ENCODE measurements at regions of chr2 and their contacts with region 1.

Region 1: DNA sequence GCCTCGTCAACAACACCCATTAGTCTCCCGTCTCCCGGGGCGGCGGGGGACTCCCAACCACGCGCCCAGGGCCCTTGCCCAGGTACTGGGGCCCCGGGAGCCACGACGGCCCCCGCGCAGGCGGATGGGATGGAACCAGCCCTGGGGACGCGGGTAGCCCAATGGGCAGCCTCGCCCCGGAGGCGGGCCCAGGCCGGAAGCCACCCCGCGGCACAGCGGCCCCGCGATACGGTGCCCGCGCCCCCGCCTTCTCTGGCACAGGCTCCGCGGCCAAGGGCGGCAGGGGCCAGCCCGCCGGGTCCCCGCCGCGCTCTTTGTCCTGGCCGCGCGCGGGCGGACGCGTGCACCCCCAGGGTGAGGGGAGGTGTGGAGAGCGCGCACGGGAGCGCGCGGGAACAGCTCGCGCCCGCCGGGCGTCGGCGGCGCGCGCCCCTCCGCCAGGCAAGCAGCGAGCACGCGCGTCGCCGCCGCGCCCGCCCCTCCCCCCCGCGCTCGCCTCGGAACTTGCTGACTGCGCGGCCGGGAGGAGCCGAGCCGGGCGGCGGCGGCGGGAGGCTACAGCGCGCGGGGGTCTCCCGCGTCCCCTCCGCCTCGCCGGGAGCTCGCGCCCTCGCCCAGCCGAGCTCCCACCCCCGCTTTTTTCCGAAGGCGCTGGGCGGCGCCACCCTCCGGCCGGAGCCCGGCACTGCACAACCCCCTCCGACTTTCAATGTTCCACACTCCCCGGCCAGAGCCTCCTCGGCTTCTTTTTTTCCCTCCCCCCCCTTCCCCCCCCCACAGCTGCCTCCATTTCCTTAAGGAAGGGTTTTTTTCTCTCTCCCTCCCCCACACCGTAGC is at the start of gene UBE2E3:
- DNase-seq: peak; percentile 94
- H3K4me3 Mint-ChIP-seq: peak within 1 kb of the TSS; percentile 89
- H3K27ac Mint-ChIP-seq: peak within 1 kb of the TSS; percentile 97
- H3K4me1 Mint-ChIP-seq: peaks cover 34% of the 10 kb centered on the region
- H3K27me3 Mint-ChIP-seq: peaks cover 38% of the 10 kb centered on the region
- total RNA-seq, gene UBE2E3: 53.9 and 54.9 TPM in 2 replicates

Region 2: GRCh38 chr2:180006781-180007579 is 973.3 kb before region 1 on chr2 and contains the start of gene CWC22:
- intact Hi-C with region 1: loop called (anchors 2 kb)
- DNase-seq: peak; percentile 95
- H3K4me3 Mint-ChIP-seq: peak within 1 kb of the TSS; percentile 94
- H3K27ac Mint-ChIP-seq: peak within 1 kb of the TSS; percentile 97
- H3K4me1 Mint-ChIP-seq: peaks cover 18% of the 10 kb centered on the region
- H3K27me3 Mint-ChIP-seq: no peaks in the 10 kb centered on the region
- total RNA-seq, gene CWC22: 30.0 and 30.2 TPM in 2 replicates

Region 3: DNA sequence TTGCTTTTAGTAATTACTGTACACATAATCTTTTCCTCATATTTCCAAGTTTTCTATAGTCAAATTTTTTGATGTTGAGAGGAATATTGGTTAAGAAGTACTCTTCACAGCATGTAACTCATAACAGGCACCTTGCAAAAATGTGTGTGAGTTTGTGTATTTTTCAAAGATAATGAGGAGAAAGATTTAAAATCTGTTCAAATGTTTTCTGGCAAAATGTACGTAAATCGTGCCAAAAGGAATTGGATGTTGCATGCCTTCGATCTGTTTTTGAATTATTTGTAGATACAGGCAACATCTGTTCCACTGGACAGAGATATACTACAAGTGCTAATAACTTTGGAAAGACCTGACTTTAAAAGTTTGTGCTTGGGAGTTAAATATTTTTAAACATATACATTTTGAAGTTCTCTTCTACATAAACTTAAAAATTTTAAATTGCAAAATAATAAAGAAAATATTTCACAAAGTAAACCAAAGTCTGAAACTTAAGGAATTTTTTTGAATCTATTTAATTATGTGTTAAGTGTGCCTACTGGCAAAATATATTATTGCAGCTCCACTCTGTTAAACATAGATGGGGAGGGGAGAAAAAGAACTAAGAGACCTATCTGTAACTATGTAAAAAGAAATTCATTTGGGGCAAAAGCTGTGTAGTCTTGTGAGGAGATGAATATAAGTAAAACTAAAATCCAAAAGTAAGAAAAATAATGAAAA is 133.4 kb before region 1 on chr2:
- intact Hi-C with region 1: no loop called
- DNase-seq: no peak
- H3K4me3 Mint-ChIP-seq: no peak overlapping the region
- H3K27ac Mint-ChIP-seq: no peak overlapping the region
- H3K4me1 Mint-ChIP-seq: no peaks in the 10 kb centered on the region
- H3K27me3 Mint-ChIP-seq: no peaks in the 10 kb centered on the region

Region 4: DNA sequence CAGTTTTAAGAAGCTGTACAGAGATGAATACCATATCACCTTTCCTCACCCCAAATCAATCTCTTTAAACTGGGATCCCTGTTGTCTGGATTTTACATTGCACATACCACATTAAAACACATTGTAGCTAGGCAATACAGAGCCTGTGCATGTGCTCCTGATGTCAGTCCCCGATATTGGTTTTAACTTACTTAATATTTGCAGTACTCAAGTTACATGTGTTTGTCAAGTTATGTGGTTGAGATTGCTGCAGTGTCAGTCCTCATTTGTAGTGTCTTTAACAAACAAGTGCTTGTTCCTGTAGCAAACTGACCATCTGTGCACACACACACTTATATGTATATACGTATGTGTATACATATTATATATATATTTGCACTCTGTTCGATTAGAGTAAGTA is 10.3 kb before region 1 on chr2:
- intact Hi-C with region 1: no loop called
- DNase-seq: no peak
- H3K4me3 Mint-ChIP-seq: no peak overlapping the region
- H3K27ac Mint-ChIP-seq: no peak overlapping the region
- H3K4me1 Mint-ChIP-seq: no peaks in the 10 kb centered on the region
- H3K27me3 Mint-ChIP-seq: peaks cover 48% of the 10 kb centered on the region

Region 5: GRCh38 chr2:181036848-181037603 is 56.7 kb after region 1 on chr2:
- intact Hi-C with region 1: loop called (anchors 1 kb)
- DNase-seq: peak; percentile 65
- H3K4me3 Mint-ChIP-seq: peak overlapping the region; percentile 16
- H3K27ac Mint-ChIP-seq: peak overlapping the region; percentile 48
- H3K4me1 Mint-ChIP-seq: peaks cover 19% of the 10 kb centered on the region
- H3K27me3 Mint-ChIP-seq: no peaks in the 10 kb centered on the region

Region 6: DNA sequence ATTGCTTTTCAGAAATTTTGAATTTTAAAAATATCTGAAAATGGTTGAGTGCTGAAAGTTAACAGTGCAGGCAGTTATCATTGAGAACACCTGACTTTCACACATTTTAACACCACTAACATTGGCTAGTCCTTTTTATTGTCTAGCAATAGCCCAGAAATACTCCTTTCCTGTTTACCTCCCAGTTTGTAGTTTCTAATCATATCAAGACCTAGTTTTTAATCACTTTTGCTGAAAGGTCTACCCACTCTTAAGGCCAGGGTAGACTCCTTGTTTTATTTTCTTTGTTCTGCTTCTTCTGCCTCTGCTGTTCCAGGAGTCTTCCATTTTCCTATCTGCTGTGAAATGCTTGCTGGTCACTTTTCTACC is 72.2 kb after region 1 on chr2:
- intact Hi-C with region 1: loop called (anchors 2 kb)
- DNase-seq: no peak
- H3K4me3 Mint-ChIP-seq: peak overlapping the region; percentile 2
- H3K27ac Mint-ChIP-seq: peak overlapping the region; percentile 20
- H3K4me1 Mint-ChIP-seq: peaks cover 17% of the 10 kb centered on the region
- H3K27me3 Mint-ChIP-seq: no peaks in the 10 kb centered on the region

Measured in activated CD4-positive, alpha-beta T cell treated with anti-CD3 and anti-CD28 coated beads, Interleukin-2, amount 10 ng/mL, durations not matched to agents 24 days and 14 days (primary cell).